ENCODE measurements at regions of chr17 and their contacts with region 1.

Region 1: GRCh38 chr17:48045316-48046001 is 2.7 kb upstream of the NFE2L1 start:
- DNase-seq: peak; percentile 88 to 95
- ATAC-seq: peak; percentile 62 to 68
- H3K4me3 ChIP-seq: peak overlapping the region in 2 of 4 donors; percentile 16 to 84
- H3K27ac ChIP-seq: peak overlapping the region; percentile 96 to 99 (median 97)
- H3K4me1 ChIP-seq: peaks cover 27 to 39% of the 10 kb centered on the region in 2 donors
- H3K27me3 ChIP-seq: no peaks in the 10 kb centered on the region
- CTCF ChIP-seq: no peak
- POLR2A ChIP-seq: peak; percentile 82 to 83

Region 2: DNA sequence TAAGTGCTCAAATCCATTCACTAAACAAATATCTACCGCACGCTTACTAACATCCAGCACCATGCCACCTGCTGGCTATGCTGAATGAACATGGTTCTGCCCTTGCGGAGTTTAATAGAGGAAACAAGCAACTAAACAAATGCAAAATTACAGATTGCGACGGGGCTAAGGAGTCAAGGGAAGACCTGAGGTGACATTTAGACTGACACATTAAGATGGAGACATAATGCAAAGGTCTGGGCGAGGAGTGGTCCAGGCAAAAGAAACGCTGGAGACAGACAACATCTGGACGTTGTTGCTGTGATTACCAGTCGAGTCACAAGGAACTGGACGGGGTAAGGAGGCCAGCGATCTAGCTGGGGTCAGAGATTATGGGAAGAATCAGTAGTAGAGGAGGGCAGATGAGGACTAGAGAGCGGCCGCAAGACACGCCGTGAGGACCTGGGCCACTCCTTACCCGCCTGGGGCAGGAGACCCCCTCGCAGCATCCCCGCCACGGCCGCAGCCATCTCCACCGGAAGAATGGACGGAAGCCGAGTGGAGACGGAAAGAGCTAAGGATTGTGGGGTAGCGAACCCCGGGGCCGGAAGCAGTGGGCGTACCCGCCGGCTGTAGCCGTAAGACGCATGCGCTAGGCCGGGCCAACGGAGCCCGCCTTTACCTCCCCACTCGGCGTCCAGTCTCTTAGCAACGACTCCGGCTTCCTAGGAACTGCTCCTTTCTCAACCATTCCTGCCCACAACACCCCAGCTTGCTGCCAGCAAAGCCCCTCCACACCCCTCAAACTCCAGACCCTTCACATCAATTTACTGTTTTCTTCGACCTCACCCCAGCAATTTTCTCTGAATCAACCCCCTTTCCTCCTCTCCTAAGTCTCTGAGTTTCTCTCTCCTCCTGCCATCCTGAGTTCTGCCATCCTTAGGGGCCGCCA is 214.2 kb before region 1 on chr17 and contains the starts of genes LRRC46 and MRPL10:
- in situ Hi-C with region 1: no loop called
- intact Hi-C with region 1: loop called (anchors 1 kb)
- DNase-seq: peak; percentile 83 to 88
- ATAC-seq: peak; percentile 91 to 94
- H3K4me3 ChIP-seq: peak within 1 kb of the TSS; percentile 77 to 92 (median 80)
- H3K27ac ChIP-seq: peak within 1 kb of the TSS; percentile 73 to 79 (median 76)
- H3K4me1 ChIP-seq: peaks cover 15 to 22% of the 10 kb centered on the region in 2 donors
- H3K27me3 ChIP-seq: no peaks in the 10 kb centered on the region
- CTCF ChIP-seq: peak in 3 of 5 experiments; percentile 12 to 28 (median 22)
- POLR2A ChIP-seq: peak; percentile 79 to 91
- total RNA-seq, gene LRRC46: 0.20 TPM in 1 of 4 donors, not detected in the others
- total RNA-seq, gene MRPL10: 38.6 to 76.5 (median 49.6) TPM

Region 3: DNA sequence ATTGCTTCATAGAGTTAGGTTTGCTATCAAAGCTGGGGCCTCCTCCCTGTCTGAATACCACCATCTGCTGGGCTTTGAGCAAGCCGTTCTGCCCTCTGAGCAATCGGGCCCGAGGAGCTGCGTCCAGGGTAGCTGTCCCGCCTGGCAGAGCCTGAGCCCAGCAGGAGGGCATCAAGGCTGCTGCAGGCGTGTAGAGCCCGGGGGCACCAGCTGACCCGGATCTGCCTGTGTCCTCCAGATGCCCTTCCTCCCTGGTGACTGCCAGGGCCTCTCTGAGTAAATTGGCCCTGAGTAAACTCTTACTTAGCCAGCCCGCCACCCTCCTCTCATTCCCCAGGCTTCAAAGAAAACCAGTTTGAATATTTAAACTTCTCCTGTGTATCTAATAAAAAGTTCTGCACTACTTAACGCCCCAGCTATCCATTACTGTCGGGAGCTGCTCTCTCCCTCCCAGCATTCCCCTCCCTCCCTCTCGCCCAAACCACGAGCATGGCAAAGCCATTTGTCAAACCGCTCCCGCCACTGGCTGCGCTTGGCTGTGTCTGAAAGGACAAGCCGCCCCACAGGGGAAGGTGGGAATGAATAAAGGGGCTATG is 58.1 kb before region 1 on chr17:
- in situ Hi-C with region 1: no loop called
- intact Hi-C with region 1: no loop called
- DNase-seq: no peak
- ATAC-seq: no peak
- H3K4me3 ChIP-seq: no peak overlapping the region
- H3K27ac ChIP-seq: no peak overlapping the region
- H3K4me1 ChIP-seq: no peaks in the 10 kb centered on the region
- H3K27me3 ChIP-seq: no peaks in the 10 kb centered on the region
- CTCF ChIP-seq: no peak
- POLR2A ChIP-seq: no peak